ENCODE measurements at regions of chr10 and their contacts with region 1.

Region 1: DNA sequence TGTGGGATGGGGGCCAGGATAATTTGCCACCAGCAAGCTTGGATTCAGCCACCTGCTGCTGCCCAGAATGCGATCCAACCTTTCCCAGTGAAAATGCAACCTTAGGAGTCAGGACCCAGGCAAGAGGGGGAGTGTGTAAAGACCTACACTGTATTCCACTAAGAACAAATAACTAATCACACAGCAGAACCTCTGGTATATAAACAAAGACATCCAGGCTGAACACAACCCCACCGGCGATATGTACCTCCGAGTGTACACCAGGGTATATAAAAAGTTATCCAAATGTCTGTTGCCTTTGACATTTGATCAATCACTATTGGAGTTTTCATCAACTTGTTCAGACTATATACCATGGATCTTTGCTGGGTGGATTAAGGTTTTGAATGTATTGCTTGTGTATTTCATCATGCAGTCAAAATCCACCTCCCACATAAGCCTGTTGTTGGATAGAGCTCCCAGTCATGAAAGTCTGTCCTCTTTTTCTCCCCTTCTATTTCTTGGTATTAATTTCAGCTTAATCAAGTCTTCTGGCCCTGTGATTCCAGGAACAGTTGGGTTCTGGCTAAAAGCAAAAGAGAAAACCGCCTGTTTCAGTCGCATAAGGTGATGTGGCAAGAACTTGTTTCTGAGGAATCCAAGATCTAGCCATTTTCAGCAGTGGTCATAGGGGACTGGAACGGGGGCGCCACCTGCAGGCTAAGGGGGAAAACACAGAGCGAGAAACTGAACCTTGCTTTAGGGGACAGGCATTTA is 290.7 kb downstream of the CCDC3 start:
- DNase-seq: peak; percentile 84
- H3K4me3 Mint-ChIP-seq: no peak overlapping the region
- H3K27ac Mint-ChIP-seq: no peak overlapping the region
- H3K4me1 Mint-ChIP-seq: peaks cover 22% of the 10 kb centered on the region
- H3K27me3 Mint-ChIP-seq: no peaks in the 10 kb centered on the region

Region 2: GRCh38 chr10:12264204-12264940 is 446.4 kb before region 1 on chr10:
- CTCF ChIA-PET with region 1: interaction called, 72 read pairs
- DNase-seq: peak; percentile 75
- H3K4me3 Mint-ChIP-seq: peak overlapping the region; percentile 29
- H3K27ac Mint-ChIP-seq: no peak overlapping the region
- H3K4me1 Mint-ChIP-seq: peaks cover 24% of the 10 kb centered on the region
- H3K27me3 Mint-ChIP-seq: peaks cover 5% of the 10 kb centered on the region

Region 3: DNA sequence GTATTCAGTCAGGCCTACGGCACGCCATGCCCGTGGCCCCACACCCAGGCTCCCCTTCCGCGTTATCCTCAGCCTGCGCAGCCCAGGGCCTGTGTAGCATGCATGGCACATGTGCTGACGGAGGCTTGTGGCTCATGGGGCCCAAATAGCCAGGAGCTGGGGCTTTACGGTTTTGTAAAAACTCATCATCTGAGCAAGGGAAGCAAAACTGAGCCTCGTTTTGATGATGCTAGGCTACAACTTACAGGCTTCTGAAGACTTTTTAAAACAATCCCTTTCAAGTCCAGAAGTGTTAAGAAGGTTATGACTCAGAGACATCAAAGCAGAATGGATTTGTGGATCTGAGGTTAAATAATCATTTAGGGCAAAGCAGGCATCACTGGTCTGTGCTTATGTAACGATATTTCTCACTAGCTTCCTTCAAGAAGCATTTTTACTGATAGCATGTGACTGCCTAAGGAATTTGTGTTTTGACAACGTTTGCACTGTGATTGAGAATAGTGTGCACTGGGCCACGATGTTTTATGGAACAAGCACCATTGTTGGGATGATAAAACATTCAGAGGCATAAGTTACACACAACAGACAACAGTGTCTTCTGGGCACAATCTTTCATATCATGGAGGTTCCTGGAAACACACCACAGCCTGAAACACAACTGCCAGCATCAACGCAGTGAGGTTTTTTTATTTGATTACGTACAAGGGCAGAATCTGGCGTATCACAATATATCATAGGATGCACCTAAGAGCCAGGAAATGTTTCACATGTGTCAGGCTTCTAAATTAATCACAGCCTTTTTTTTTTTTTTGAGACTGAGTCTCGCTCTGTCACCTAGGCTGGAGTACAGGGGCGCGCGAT is 16.4 kb after region 1 on chr10:
- CTCF ChIA-PET with region 1: interaction called, 10 read pairs
- DNase-seq: no peak
- H3K4me3 Mint-ChIP-seq: no peak overlapping the region
- H3K27ac Mint-ChIP-seq: no peak overlapping the region
- H3K4me1 Mint-ChIP-seq: peaks cover 21% of the 10 kb centered on the region
- H3K27me3 Mint-ChIP-seq: no peaks in the 10 kb centered on the region

Region 4: DNA sequence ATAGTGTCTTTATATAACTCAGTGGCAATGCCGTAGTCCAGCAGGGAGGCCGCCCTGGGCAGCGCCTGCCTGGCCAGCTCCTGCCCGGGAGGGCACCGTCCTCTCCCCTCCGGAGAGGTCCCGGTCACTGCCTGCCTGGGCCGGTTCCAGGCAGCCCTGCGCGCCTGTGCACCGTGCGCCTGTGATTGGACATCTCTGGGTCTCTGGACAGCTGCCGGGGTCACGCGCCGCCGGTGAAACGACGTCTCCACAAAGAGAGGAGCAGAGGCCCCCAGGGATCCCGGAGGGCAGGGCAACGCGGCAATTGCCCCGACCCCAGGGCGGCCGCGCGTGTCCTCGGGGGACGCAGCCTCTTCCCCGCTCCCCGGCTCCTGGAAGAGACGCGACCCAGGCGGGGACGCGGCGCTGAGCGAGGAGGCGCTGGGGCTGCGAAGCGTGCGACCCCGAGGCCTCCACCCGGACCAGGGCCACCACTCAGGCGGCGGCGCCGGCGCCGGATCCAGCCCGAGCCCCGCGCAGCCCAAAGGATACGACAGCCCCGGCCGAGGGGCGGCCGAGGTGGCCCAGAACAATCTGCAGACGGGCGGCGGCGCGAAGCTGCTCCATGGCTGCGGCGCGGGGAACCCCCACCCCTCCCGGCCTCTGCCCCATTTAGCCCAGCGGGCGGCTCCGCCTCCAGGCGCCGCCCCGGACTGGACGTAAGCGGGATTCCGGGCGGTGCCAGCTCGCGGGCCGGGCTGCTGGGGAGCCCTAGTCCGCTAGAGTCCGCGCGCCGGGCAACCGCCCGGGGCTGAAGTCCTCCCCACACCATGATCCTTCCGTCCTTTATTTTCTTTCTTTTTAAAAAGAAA is 588.9 kb after region 1 on chr10 and contains the start of gene PHYH:
- CTCF ChIA-PET with region 1: no interaction called
- DNase-seq: peak; percentile 87
- H3K4me3 Mint-ChIP-seq: peak within 1 kb of the TSS; percentile 77
- H3K27ac Mint-ChIP-seq: peak within 1 kb of the TSS; percentile 88
- H3K4me1 Mint-ChIP-seq: peaks cover 29% of the 10 kb centered on the region
- H3K27me3 Mint-ChIP-seq: no peaks in the 10 kb centered on the region